B cell (primary cell): ENCODE measurements at regions of chr11 and their contacts with region 1.

Region 1: DNA sequence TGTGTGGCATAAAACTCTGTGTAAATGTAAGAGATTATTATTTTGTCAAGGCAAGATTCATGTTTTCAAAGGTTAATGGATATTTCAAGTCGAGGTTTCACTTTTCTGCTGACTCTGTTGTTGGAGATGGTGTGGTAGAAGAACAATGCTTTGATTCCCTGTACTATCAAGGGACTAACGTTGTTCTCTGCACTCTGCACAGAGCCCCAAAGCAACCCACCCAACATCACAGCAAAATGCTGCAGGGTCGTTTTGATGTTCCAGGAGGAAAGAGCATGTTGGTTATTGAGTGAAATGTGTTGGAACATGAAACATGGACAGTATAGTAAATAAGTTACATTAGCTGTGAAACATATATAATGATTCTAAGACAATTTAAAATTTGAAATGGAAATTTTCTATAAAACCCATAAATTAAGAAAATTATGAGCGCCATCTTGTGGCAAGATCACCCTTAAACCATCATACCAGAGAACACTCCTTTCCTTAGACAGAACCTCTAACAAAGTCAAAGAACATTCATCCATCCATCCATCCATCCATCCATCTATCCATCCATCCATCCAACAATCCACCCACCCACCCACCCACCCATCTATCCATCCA is 164.4 kb upstream of the ZBED5 start:
- DNase-seq: peak; percentile 56
- ATAC-seq: no peak
- H3K4me3 ChIP-seq: no peak overlapping the region
- H3K4me3 Mint-ChIP-seq: no peak overlapping the region
- H3K27ac ChIP-seq: no peak overlapping the region
- H3K27ac Mint-ChIP-seq: no peak overlapping the region
- H3K4me1 ChIP-seq: no peaks in the 10 kb centered on the region
- H3K4me1 Mint-ChIP-seq: peaks cover 8% of the 10 kb centered on the region
- H3K27me3 ChIP-seq: peaks cover 0 to 3% (median 0%) of the 10 kb centered on the region in 4 experiments
- H3K27me3 Mint-ChIP-seq: peaks cover 6% of the 10 kb centered on the region
- CTCF ChIP-seq: peak; percentile 77

Region 2: DNA sequence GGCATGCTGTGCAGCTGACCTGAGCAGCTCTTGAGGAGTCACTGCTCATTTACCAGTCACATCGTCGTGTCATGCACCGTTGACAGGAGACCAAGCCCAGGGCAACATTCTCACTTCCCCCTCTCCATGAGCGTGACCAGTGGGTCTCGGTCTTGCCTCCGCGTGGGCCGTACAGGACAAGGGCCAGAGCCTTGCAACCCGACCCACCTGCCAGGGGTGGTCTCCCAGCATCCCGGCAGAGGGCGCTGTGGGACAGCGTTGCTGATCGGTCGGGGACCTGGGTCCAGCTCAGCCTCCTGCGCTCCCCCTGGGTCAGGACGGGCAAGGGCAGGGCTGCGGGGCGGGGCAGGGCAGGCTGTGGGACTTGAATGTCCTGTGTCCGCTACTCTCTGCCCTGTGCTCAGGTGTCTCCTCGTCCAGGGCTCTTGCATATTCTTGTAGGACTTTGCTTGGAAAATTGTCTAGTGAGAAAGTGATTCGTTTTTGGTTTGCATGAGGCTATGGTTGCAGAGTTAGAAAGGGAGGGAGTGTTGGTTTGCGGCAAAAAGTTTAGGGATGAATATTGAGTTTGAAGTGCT is 229.7 kb before region 1 on chr11:
- CTCF ChIA-PET with region 1: interaction called, 62 read pairs
- POLR2A ChIA-PET with region 1: no interaction called
- intact Hi-C with region 1: loop called (anchors 1 kb)
- DNase-seq: peak; percentile 86
- ATAC-seq: peak; percentile 97
- H3K4me3 ChIP-seq: peak overlapping the region in 2 of 5 experiments; percentile 17 to 32
- H3K4me3 Mint-ChIP-seq: peak overlapping the region; percentile 17
- H3K27ac ChIP-seq: no peak overlapping the region
- H3K27ac Mint-ChIP-seq: no peak overlapping the region
- H3K4me1 ChIP-seq: peaks cover 13 to 20% of the 10 kb centered on the region in 2 donors
- H3K4me1 Mint-ChIP-seq: peaks cover 21% of the 10 kb centered on the region
- H3K27me3 ChIP-seq: no peaks in the 10 kb centered on the region
- H3K27me3 Mint-ChIP-seq: no peaks in the 10 kb centered on the region
- CTCF ChIP-seq: peak; percentile 90

Region 3: GRCh38 chr11:10938650-10939387 is 83.4 kb before region 1 on chr11:
- CTCF ChIA-PET with region 1: interaction called, 155 read pairs
- POLR2A ChIA-PET with region 1: no interaction called
- intact Hi-C with region 1: no loop called
- DNase-seq: no peak
- ATAC-seq: no peak
- H3K4me3 ChIP-seq: no peak overlapping the region
- H3K4me3 Mint-ChIP-seq: no peak overlapping the region
- H3K27ac ChIP-seq: no peak overlapping the region
- H3K27ac Mint-ChIP-seq: no peak overlapping the region
- H3K4me1 ChIP-seq: peaks cover 10% of the 10 kb centered on the region in 2 donors
- H3K4me1 Mint-ChIP-seq: peaks cover 4% of the 10 kb centered on the region
- H3K27me3 ChIP-seq: peaks cover 0 to 5% (median 0%) of the 10 kb centered on the region in 4 experiments
- H3K27me3 Mint-ChIP-seq: no peaks in the 10 kb centered on the region
- CTCF ChIP-seq: no peak

Region 4: GRCh38 chr11:10943968-10944367 is 78.3 kb before region 1 on chr11:
- CTCF ChIA-PET with region 1: interaction called, 16 read pairs
- POLR2A ChIA-PET with region 1: no interaction called
- intact Hi-C with region 1: no loop called
- DNase-seq: no peak
- ATAC-seq: no peak
- H3K4me3 ChIP-seq: no peak overlapping the region
- H3K4me3 Mint-ChIP-seq: no peak overlapping the region
- H3K27ac ChIP-seq: no peak overlapping the region
- H3K27ac Mint-ChIP-seq: no peak overlapping the region
- H3K4me1 ChIP-seq: no peaks in the 10 kb centered on the region
- H3K4me1 Mint-ChIP-seq: no peaks in the 10 kb centered on the region
- H3K27me3 ChIP-seq: no peaks in the 10 kb centered on the region
- H3K27me3 Mint-ChIP-seq: peaks cover 12% of the 10 kb centered on the region
- CTCF ChIP-seq: no peak

Region 5: GRCh38 chr11:10975287-10975721 is 46.9 kb before region 1 on chr11:
- CTCF ChIA-PET with region 1: interaction called, 8 read pairs
- POLR2A ChIA-PET with region 1: interaction called, 10 read pairs
- intact Hi-C with region 1: no loop called
- DNase-seq: no peak
- ATAC-seq: no peak
- H3K4me3 ChIP-seq: no peak overlapping the region
- H3K4me3 Mint-ChIP-seq: no peak overlapping the region
- H3K27ac ChIP-seq: no peak overlapping the region
- H3K27ac Mint-ChIP-seq: no peak overlapping the region
- H3K4me1 ChIP-seq: peaks cover 49% of the 10 kb centered on the region in 2 donors
- H3K4me1 Mint-ChIP-seq: peaks cover 52% of the 10 kb centered on the region
- H3K27me3 ChIP-seq: no peaks in the 10 kb centered on the region
- H3K27me3 Mint-ChIP-seq: no peaks in the 10 kb centered on the region
- CTCF ChIP-seq: no peak

Region 6: DNA sequence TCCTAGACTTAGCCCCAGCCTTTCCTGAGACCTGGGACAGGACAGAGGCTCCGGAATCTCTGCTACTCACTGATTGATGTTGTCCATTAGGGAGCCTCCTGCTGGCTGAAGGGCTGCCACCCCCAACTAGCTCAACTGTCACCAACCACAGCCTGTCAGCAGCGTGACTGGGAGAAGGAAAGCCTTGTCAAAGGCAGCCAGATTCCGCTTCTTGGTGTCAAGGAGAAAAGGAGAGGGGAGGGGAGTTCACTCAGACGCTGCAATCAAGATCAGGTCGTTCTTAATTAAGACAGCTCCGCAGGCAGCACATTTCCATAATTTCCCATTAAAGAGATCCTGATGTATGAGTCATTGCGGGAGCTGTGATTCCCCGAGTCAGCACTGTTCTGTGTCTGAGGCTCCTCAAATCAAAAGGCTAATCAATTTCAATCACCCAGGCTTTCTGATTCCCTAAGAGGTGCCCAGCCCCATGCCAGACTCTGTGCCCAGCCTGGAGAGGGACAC is 11.6 kb before region 1 on chr11:
- CTCF ChIA-PET with region 1: interaction called, 19 read pairs
- POLR2A ChIA-PET with region 1: no interaction called
- intact Hi-C with region 1: no loop called
- DNase-seq: peak; percentile 31
- ATAC-seq: no peak
- H3K4me3 ChIP-seq: no peak overlapping the region
- H3K4me3 Mint-ChIP-seq: no peak overlapping the region
- H3K27ac ChIP-seq: no peak overlapping the region
- H3K27ac Mint-ChIP-seq: no peak overlapping the region
- H3K4me1 ChIP-seq: peaks cover 24% of the 10 kb centered on the region in 2 donors
- H3K4me1 Mint-ChIP-seq: peaks cover 23% of the 10 kb centered on the region
- H3K27me3 ChIP-seq: peaks cover 0 to 14% (median 6%) of the 10 kb centered on the region in 4 experiments
- H3K27me3 Mint-ChIP-seq: peaks cover 18% of the 10 kb centered on the region
- CTCF ChIP-seq: no peak

Region 7: DNA sequence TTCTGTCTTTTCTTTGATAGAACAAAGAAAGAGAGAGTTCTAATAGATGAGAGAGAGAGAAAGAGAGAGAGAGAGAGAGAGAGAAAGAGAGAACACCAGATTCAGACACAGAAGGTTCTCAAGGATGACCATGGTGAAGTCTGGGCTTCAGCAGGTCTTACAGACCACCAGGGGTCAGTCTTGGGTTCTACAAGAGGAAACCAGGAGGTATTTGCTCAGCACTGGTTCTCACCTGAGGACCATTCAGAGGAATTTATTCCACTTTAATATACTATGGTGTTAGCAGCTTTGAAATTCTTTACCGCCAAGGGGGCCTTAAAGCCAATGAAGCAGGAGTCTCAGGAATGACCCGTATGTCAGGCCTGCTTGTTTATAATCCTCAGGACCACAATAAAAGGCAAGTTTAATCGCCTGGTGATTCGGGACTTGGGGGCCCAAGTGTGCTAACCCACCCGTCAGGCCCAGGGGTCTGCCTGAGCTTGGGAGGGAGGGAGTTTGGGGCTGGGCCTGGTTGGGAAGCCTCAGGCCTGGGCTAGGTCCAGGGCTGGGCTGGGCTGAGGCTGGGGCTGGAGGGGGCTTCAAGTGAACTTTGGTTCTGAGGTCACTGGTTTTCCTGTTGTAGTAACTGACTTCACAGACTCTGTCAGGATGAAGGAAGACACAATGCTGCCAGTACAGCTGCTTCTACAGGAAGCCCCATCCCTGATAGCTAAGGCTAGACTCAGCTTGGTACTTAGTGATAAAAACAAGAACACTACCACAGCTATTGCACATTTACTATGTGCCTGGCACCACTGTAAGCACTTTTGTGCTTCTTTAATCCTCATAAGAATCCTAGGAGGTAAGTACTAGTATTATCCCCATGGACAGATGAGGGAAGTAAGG is 14.9 kb after region 1 on chr11:
- CTCF ChIA-PET with region 1: interaction called, 78 read pairs
- POLR2A ChIA-PET with region 1: no interaction called
- intact Hi-C with region 1: no loop called
- DNase-seq: peak; percentile 57
- ATAC-seq: peak; percentile 31
- H3K4me3 ChIP-seq: no peak overlapping the region
- H3K4me3 Mint-ChIP-seq: no peak overlapping the region
- H3K27ac ChIP-seq: no peak overlapping the region
- H3K27ac Mint-ChIP-seq: no peak overlapping the region
- H3K4me1 ChIP-seq: no peaks in the 10 kb centered on the region
- H3K4me1 Mint-ChIP-seq: no peaks in the 10 kb centered on the region
- H3K27me3 ChIP-seq: peaks cover 0 to 16% (median 3%) of the 10 kb centered on the region in 4 experiments
- H3K27me3 Mint-ChIP-seq: peaks cover 35% of the 10 kb centered on the region
- CTCF ChIP-seq: peak; percentile 69

Region 8: DNA sequence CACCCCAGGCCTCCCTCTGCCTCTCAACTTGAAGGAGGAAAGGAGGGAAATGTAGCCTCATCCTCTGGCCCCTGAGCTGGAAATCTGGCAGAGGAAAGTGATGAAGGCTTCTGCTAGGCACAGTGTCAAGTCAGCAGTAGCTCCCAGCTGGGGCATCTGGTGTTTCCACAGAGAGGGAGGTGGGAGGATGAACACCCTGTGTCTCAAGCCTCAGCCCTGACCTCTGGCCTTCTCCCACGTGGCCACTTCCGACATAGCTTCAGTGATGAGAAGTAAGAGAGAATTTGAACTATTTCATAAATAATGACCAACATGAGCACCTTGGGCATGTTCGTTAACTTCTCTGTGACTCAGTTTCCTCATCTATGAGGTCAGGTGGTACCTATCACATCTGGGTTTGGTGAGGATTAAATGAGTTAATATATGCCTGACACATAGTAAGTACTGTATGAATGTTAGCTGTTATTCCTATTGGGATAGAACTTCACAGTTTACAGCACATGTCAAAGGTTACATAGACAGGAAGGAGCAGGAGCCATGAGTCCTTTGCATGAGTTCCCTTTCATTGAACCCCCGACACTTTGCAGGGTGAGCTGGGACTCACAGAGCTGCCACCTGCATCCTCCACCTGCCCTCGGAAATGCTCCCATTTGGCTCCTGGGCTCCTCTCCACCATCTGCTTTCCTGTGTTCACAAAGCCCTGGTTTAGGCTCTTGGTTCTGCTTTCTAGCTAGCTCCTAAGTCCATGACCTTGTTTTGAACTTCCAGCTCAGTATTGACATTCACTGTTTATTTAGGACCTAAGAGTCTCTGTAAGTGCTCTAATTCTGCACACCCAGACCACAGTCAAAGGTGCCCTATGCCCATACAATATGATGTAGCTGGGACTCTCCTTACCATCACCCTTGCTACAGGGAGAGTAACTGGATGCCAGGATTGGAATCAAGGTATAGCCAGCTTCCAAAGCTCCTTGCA is 269.1 kb after region 1 on chr11:
- CTCF ChIA-PET with region 1: no interaction called
- POLR2A ChIA-PET with region 1: no interaction called
- intact Hi-C with region 1: no loop called
- DNase-seq: no peak
- ATAC-seq: no peak
- H3K4me3 ChIP-seq: no peak overlapping the region
- H3K4me3 Mint-ChIP-seq: no peak overlapping the region
- H3K27ac ChIP-seq: no peak overlapping the region
- H3K27ac Mint-ChIP-seq: no peak overlapping the region
- H3K4me1 ChIP-seq: no peaks in the 10 kb centered on the region
- H3K4me1 Mint-ChIP-seq: no peaks in the 10 kb centered on the region
- H3K27me3 ChIP-seq: no peaks in the 10 kb centered on the region
- H3K27me3 Mint-ChIP-seq: peaks cover 8% of the 10 kb centered on the region
- CTCF ChIP-seq: no peak